ENCODE measurements at regions of chr7 and their contacts with region 1.

Region 1: DNA sequence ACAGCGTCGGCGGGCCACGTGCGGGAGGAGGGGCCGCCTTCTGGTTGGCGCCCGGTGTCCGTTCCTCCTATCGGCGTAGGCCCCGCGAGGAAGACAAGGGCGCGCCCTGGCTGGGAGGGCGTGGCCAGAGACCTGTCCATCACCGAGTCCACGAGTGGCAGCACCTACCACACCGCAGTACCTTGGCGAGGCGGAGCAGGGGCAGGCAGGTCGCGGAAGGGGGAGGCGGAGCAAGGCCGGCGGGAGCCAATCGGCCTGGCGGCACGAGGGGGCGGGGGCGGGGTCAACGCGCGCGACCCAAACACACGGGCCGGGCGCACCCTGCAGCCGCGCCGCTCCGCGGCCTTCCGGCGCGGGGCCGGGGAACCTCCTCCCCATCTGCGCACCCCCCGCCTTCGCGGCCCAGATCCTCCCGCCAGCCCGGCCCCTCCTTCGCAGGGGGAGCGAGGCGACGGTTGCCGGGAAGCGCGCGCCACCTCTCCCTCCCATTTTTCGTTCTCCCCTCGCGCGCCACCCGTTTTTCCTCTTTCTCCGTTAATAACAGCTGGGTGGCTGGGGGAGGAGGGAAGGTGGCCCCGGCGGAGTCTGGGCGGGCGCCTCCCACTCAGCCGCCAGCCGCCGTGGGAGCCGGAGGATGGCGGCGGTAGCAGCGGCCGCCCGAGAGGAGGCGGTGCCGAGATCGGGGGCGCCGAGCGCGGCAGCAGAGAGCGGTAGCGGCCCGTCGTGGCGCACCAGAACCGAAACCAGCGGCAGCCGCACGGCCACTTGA is at the start of gene ZNRF2:
- DNase-seq: peak; percentile 85 to 99 (median 95)

Region 2: DNA sequence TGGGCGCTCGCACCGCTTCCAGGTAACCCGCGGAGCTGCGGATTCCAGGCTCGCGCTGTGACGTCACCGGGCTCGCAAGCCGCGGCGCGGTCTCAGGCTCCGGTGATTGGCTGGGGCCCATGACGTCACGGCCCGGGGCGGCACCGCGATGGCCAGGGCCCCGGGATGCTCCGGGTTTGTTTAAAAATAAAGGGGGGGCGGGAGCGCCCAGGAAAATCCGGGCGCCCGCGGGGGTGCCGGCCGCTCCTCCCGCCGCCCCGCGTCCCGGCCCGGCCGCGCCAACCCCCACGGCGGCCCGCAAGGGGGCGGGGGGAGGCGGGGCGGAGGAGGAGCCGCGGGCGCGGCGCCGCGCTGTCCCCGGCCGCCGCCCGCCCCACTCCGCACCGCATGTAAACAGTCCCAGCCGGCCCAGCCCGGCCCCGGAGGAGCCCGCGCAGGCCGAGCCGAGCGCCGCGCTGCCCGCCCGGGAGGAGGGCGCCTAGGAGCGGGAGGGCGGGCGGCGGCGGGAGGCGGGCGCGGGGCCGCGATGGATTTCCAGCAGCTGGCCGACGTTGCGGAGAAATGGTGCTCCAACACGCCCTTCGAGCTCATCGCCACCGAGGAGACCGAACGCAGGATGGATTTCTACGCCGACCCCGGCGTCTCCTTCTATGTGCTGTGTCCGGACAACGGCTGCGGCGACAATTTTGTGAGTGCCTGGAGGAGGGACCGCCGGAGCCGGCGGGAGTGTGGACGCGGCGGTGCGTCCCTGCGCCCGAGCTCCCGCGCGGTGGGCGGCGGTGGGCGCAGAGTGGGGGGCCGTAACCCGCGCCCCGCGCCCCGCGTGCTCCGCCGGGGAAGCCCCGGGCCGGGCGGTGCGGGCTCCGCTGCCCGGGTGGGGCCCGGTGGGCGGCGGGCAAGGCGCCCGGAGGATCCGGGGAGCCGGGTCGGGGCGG is 149.6 kb before region 1 on chr7 and contains the start of gene MTURN:
- intact Hi-C with region 1: loop called (anchors 10 kb)
- DNase-seq: peak; percentile 87 to 97 (median 93)

Region 3: DNA sequence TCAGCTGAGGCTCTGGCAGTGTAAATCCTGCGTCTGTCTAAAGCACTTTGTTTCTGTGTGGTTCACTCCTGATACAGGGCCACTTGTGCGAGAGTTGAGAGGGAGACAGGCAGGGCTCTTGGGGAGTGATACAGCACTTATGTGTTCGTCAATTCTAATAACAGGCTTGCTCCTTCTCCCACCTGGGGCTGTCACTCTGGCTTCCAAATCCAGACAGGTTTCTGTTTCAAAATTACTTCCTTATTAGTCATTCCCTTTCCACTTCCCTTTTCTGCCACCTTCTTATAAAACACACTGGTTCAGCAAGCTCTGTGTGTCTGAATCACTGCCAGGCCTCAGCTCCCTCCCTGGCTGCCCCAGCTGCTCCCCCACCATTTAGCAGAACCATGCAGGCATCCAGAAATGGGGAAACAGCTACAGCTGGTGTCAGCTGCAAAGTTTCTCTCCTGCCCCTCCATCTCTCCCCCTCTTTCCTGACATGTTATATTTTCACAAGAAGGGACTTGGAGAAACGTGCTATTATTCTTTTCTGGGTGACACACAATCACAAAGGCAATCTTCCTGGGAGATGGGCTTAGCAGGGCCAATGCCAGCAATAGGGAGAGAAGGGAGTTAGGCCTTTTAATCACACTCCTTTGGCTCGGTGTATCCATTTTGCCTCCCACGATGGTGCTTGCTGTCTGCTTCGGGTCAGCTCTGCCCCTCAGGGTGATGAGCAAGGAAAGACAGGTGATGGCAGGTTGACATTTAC is 58.4 kb before region 1 on chr7:
- intact Hi-C with region 1: no loop called
- DNase-seq: peak; percentile 34 to 88 (median 68)

Region 4: GRCh38 chr7:30312178-30312577 is 27.7 kb after region 1 on chr7:
- intact Hi-C with region 1: no loop called
- DNase-seq: no peak

Region 5: GRCh38 chr7:30521532-30521931 is 237.1 kb after region 1 on chr7:
- intact Hi-C with region 1: no loop called
- DNase-seq: no peak